Mammary epithelial cell (primary cell): ENCODE measurements at regions of chr11 and their contacts with region 1.

Region 1: GRCh38 chr11:62217191-62217748 is 8.8 kb downstream of the SCGB2A1 start:
- DNase-seq: no peak
- H3K4me3 ChIP-seq: no peak overlapping the region
- H3K27ac ChIP-seq: no peak overlapping the region
- H3K4me1 ChIP-seq: no peaks in the 10 kb centered on the region
- H3K27me3 ChIP-seq: no peaks in the 10 kb centered on the region
- CTCF ChIP-seq: peak; percentile 37 to 62

Region 2: GRCh38 chr11:62123669-62124185 is 93.5 kb before region 1 on chr11 and contains the start of gene INCENP:
- CTCF ChIA-PET with region 1: no interaction called
- dilution Hi-C with region 1: no loop called
- in situ Hi-C with region 1: no loop called
- intact Hi-C with region 1: no loop called
- DNase-seq: peak; percentile 97
- H3K4me3 ChIP-seq: peak within 1 kb of the TSS; percentile 52 to 98 (median 81)
- H3K27ac ChIP-seq: peak within 1 kb of the TSS; percentile 67
- H3K4me1 ChIP-seq: peaks cover 13% of the 10 kb centered on the region
- H3K27me3 ChIP-seq: no peaks in the 10 kb centered on the region
- CTCF ChIP-seq: no peak
- total RNA-seq, gene INCENP: 15.7 to 60.6 TPM

Region 3: DNA sequence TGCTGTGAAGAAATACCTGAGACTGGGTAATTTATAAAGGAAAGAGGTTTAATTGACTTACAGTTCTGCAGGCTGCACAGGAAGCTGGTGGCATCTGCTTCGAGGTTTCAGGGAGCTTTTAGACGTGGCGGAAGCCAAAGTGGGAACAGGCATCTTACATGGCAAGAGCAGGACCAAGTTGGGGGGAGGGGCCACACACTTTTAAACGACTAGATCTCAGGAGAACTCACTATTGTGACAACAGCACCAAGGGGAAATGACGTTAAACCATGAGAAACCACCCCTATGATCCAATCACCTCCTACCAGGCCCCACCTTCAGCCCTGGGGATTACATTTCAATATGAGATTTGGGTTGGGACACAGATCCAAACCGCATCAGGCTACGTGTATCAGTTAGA is 92.7 kb after region 1 on chr11:
- CTCF ChIA-PET with region 1: no interaction called
- dilution Hi-C with region 1: no loop called
- in situ Hi-C with region 1: loop called (anchors 5 to 10 kb)
- intact Hi-C with region 1: loop called (anchors 1 kb)
- DNase-seq: no peak
- H3K4me3 ChIP-seq: no peak overlapping the region
- H3K27ac ChIP-seq: no peak overlapping the region
- H3K4me1 ChIP-seq: no peaks in the 10 kb centered on the region
- H3K27me3 ChIP-seq: no peaks in the 10 kb centered on the region
- CTCF ChIP-seq: no peak